ENCODE measurements at regions of chr15 and their contacts with region 1.

Region 1: GRCh38 chr15:80105595-80106450 is 46.3 kb downstream of the ZFAND6 start:
- DNase-seq: no peak
- H3K4me3 ChIP-seq: no peak overlapping the region
- H3K27ac ChIP-seq: no peak overlapping the region
- H3K4me1 ChIP-seq: peaks cover 0 to 6% (median 0%) of the 10 kb centered on the region in 4 experiments; a peak in 2 of 7 replicates
- H3K27me3 ChIP-seq: no peaks in the 10 kb centered on the region
- CTCF ChIP-seq: no peak
- EP300 ChIP-seq: no peak
- POLR2A ChIP-seq: no peak
- RAD21 ChIP-seq: no peak

Region 2: DNA sequence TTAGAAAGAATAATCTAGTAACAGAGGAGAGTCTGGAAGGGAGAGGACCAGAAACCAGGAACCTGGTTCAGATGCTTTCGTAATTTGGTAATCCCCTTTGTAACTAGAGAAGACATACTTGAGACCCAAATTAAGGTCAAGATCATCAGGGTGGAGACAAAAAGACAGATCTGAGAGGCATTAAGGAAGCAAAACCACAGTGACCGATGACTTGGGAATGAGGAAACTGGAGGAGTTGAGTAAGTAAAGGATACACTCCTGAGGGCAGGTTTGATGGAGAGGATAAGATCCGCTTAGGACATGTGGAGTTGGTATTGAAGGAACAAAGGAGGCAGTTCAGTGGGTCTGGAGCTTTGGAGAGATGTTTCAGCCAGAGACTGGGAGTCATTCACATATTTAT is 111.2 kb before region 1 on chr15:
- CTCF ChIA-PET with region 1: no interaction called
- POLR2A ChIA-PET with region 1: no interaction called
- DNase-seq: no peak
- H3K4me3 ChIP-seq: no peak overlapping the region
- H3K27ac ChIP-seq: no peak overlapping the region
- H3K4me1 ChIP-seq: no peaks in the 10 kb centered on the region
- H3K27me3 ChIP-seq: no peaks in the 10 kb centered on the region
- CTCF ChIP-seq: no peak
- EP300 ChIP-seq: no peak
- POLR2A ChIP-seq: no peak
- RAD21 ChIP-seq: no peak

Region 3: GRCh38 chr15:80090879-80091503 is 14.8 kb before region 1 on chr15:
- CTCF ChIA-PET with region 1: interaction called, 20 read pairs
- POLR2A ChIA-PET with region 1: interaction called, 4 read pairs
- DNase-seq: no peak
- H3K4me3 ChIP-seq: no peak overlapping the region
- H3K27ac ChIP-seq: no peak overlapping the region
- H3K4me1 ChIP-seq: no peaks in the 10 kb centered on the region; a peak in 1 of 7 replicates
- H3K27me3 ChIP-seq: no peaks in the 10 kb centered on the region
- CTCF ChIP-seq: peak in 1 of 3 experiments; percentile 27; a peak in 1 of 4 replicates
- EP300 ChIP-seq: no peak
- POLR2A ChIP-seq: no peak
- RAD21 ChIP-seq: no peak

Region 4: GRCh38 chr15:80217327-80217900 is 111.6 kb after region 1 on chr15:
- CTCF ChIA-PET with region 1: no interaction called
- POLR2A ChIA-PET with region 1: no interaction called
- DNase-seq: no peak
- H3K4me3 ChIP-seq: no peak overlapping the region
- H3K27ac ChIP-seq: no peak overlapping the region
- H3K4me1 ChIP-seq: no peaks in the 10 kb centered on the region
- H3K27me3 ChIP-seq: no peaks in the 10 kb centered on the region
- CTCF ChIP-seq: no peak
- EP300 ChIP-seq: no peak
- POLR2A ChIP-seq: no peak
- RAD21 ChIP-seq: no peak